Panc1 (cell line): ENCODE measurements at regions of chr14 and their contacts with region 1.

Region 1: GRCh38 chr14:59028476-59029202 is 159.8 kb upstream of the DAAM1 start:
- DNase-seq: peak; percentile 56
- ATAC-seq: peak; percentile 92
- H3K4me3 ChIP-seq: no peak overlapping the region
- H3K27ac ChIP-seq: no peak overlapping the region
- H3K4me1 ChIP-seq: no peaks in the 10 kb centered on the region
- H3K27me3 ChIP-seq: no peaks in the 10 kb centered on the region; the same call in 1 of the 2 replicates
- CTCF ChIP-seq: peak; percentile 86

Region 2: GRCh38 chr14:58637391-58638230 is 391.0 kb before region 1 on chr14 and contains the start of gene DACT1:
- CTCF ChIA-PET with region 1: no interaction called
- POLR2A ChIA-PET with region 1: no interaction called
- in situ Hi-C with region 1: no loop called
- intact Hi-C with region 1: loop called (anchors 10 kb)
- DNase-seq: no peak
- ATAC-seq: peak; percentile 78
- H3K4me3 ChIP-seq: peak within 1 kb of the TSS; percentile 49 to 67
- H3K27ac ChIP-seq: no peak within 1 kb of the TSS
- H3K4me1 ChIP-seq: no peaks in the 10 kb centered on the region
- H3K27me3 ChIP-seq: peaks cover 20% of the 10 kb centered on the region
- CTCF ChIP-seq: no peak
- total RNA-seq, gene DACT1: 0.15 TPM

Region 3: DNA sequence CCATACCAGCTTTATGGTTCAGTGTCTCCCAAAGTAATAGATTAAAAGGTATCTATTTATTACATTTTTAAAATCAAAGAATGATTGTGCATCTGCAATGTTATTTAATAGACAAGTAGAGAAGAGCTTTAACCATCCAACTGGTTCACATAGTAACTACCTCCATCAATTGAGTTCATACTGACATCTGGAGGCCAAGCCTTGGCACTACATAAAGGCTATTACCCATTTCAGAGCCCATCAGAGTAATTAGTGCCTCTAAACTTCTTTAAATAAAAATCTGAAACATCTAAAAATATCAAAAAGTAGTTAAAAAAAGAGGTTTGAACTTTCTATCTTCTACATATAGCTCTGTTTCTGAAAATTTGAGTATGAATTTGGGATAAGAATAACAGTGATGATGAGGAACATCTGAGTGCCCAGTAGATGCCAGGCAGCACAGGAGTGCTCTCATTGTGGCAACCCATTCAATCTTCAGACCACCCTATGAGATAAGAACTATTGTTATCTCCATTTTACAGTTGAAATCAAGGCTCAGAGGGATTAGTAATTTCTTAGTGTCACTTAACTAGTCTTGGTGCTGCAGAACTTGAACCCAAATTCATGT is 26.9 kb after region 1 on chr14:
- CTCF ChIA-PET with region 1: no interaction called
- POLR2A ChIA-PET with region 1: no interaction called
- in situ Hi-C with region 1: no loop called
- intact Hi-C with region 1: loop called (anchors 1 kb)
- DNase-seq: peak; percentile 24
- ATAC-seq: 0 out of 2 replicates have a peak, but pooled peaks have one; percentile 70
- H3K4me3 ChIP-seq: no peak overlapping the region
- H3K27ac ChIP-seq: no peak overlapping the region
- H3K4me1 ChIP-seq: no peaks in the 10 kb centered on the region
- H3K27me3 ChIP-seq: no peaks in the 10 kb centered on the region
- CTCF ChIP-seq: peak; percentile 70; the same call in 1 of the 2 replicates

Region 4: GRCh38 chr14:59067127-59067894 is 38.7 kb after region 1 on chr14:
- CTCF ChIA-PET with region 1: no interaction called
- POLR2A ChIA-PET with region 1: no interaction called
- in situ Hi-C with region 1: no loop called
- intact Hi-C with region 1: no loop called
- DNase-seq: no peak
- ATAC-seq: no peak
- H3K4me3 ChIP-seq: no peak overlapping the region
- H3K27ac ChIP-seq: no peak overlapping the region
- H3K4me1 ChIP-seq: no peaks in the 10 kb centered on the region
- H3K27me3 ChIP-seq: peaks cover 2% of the 10 kb centered on the region; the same call in 1 of the 2 replicates
- CTCF ChIP-seq: no peak

Region 5: DNA sequence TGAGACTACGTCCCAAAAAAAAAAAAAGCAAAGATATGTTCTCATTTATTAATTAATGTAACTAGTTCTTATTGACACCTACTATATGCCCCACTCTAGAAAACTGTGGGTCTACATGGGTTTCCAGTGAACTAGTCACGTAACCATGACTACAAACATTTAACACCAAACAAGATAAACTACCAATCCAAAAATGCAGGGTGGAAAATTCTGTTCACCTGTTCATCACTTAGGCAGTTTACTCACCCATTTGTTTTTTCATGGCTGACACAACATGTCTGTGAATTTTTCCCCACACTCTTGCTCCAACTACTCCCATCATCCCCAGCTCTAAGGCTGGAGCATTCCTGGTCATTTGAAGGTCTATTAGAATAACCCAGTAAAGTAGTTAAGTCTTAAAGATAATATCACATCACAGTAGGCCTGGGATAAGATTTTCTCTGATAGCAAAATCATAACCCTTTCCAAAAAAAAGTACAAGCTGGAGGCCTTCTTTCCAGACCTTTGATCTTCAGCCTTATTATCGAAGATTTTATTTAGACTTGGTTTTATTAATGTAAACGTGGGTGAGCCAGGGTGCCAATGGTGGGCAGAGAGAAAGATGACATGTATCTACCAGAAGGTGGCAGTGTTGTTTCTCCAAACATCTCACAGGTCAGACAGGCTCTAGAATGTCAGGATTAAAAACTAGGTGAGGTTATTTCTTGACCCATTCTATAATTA is 98.2 kb after region 1 on chr14:
- CTCF ChIA-PET with region 1: no interaction called
- POLR2A ChIA-PET with region 1: no interaction called
- in situ Hi-C with region 1: no loop called
- intact Hi-C with region 1: loop called (anchors 1 kb)
- DNase-seq: peak; percentile 30
- ATAC-seq: peak; percentile 89
- H3K4me3 ChIP-seq: no peak overlapping the region
- H3K27ac ChIP-seq: no peak overlapping the region
- H3K4me1 ChIP-seq: no peaks in the 10 kb centered on the region
- H3K27me3 ChIP-seq: peaks cover 4% of the 10 kb centered on the region; the same call in 1 of the 2 replicates
- CTCF ChIP-seq: peak; percentile 66; the same call in 1 of the 2 replicates

Region 6: DNA sequence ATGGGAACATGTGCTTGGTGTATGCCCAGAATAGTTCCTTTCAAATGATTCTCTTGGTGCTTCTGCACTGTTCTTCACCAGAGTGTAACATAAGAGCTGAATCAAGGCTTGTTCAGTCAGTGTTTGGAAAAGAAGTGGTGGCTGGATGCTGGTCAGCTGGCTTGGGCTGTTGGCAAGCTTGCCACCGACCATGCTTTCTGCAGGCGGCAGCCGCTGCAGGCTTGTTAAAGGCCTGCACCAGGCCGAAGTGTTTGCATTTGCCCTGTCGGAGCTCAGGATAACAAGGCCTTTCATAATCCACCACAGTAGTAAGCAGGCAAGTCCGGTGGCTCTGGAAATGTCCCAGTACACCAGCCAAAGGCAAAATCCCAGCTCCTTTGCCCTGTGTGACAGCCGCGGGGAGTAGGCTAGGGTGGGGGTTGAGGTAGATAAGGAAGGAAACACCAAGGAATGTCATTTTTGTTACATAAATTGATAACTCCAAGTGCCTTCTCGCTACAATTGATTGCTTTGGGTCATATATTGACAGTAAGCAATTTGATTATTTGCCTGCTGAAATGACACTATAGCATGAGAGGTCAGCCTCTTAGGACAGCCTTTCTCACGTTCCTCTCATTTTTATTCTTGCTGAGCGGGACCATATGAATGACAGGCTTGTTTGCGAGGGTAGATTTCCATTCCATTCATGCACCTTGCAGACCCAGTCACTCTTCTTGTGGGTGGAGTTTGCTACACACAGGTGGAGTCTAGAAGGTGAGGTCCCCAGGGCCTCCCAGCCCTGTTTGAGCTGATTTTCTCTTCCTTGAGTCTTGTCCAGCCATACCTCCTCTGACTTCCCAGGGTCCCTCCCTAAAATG is 186.9 kb after region 1 on chr14:
- CTCF ChIA-PET with region 1: no interaction called
- POLR2A ChIA-PET with region 1: no interaction called
- in situ Hi-C with region 1: no loop called
- intact Hi-C with region 1: no loop called
- DNase-seq: no peak
- ATAC-seq: no peak
- H3K4me3 ChIP-seq: no peak overlapping the region
- H3K27ac ChIP-seq: no peak overlapping the region
- H3K4me1 ChIP-seq: no peaks in the 10 kb centered on the region
- H3K27me3 ChIP-seq: no peaks in the 10 kb centered on the region
- CTCF ChIP-seq: no peak

Region 7: DNA sequence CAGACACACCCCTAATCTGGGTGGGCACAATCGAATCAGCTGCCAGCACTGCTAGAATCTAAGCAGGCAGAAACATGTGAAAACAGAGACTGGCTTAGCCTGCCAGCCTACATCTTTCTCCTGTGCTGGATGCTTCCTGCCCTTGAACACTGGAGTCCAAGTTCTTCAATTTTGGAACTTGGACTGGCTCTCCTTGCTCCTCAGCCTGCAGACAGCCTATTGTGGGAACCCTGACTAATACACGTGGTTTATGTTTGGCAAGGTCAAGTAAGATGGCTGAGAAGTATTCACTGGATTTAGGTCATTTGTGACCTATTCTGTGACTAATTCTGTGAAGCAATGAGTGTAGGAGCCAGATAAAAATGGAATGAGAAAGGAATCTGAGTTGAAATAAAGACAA is 425.5 kb after region 1 on chr14:
- CTCF ChIA-PET with region 1: no interaction called
- POLR2A ChIA-PET with region 1: no interaction called
- in situ Hi-C with region 1: no loop called
- intact Hi-C with region 1: loop called (anchors 10 kb)
- DNase-seq: no peak
- ATAC-seq: no peak
- H3K4me3 ChIP-seq: no peak overlapping the region
- H3K27ac ChIP-seq: no peak overlapping the region
- H3K4me1 ChIP-seq: no peaks in the 10 kb centered on the region
- H3K27me3 ChIP-seq: no peaks in the 10 kb centered on the region
- CTCF ChIP-seq: no peak